ENCODE measurements at regions of chr11 and their contacts with region 1.

Region 1: GRCh38 chr11:57249384-57250319 is 12.6 kb upstream of the APLNR start:
- DNase-seq: no peak
- H3K4me3 ChIP-seq: no peak overlapping the region
- H3K27me3 ChIP-seq: peaks cover 2% of the 10 kb centered on the region; the same call in 1 of the 2 replicates
- CTCF ChIP-seq: peak; percentile 87

Region 2: GRCh38 chr11:56271092-56271491 is 978.6 kb before region 1 on chr11:
- CTCF ChIA-PET with region 1: no interaction called
- POLR2A ChIA-PET with region 1: no interaction called
- DNase-seq: no peak
- H3K4me3 ChIP-seq: no peak overlapping the region
- H3K27me3 ChIP-seq: no peaks in the 10 kb centered on the region
- CTCF ChIP-seq: no peak

Region 3: DNA sequence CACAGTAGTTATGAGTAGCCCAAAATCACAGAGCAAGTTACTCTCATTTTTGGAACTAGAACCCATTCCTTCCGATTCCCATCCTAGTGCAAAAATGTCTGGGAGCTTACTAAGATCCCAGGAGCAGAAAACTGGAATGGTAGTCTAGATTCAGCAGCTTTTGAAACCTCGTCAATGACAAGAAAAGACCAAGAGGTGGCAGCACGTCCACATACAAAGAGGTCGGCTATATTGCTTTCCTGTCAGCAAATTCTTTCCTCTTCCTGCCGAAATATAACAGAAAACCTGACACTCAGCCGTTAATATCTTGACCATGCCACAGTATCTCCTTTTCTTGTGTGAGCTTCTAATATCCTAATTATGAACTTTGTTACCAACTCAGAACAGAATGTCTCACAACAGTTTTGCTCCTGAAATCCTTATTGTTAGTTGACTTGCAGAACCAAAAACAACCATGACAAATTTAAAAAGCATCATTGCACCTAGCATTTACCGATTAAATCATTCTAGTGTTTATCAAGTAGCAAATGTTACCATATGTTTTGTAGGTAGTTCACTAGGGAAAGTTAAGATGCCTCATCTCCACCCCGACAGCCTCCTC is 408.3 kb before region 1 on chr11:
- CTCF ChIA-PET with region 1: interaction called, 150 read pairs
- POLR2A ChIA-PET with region 1: interaction called, 9 read pairs
- DNase-seq: peak; percentile 5
- H3K4me3 ChIP-seq: no peak overlapping the region
- H3K27me3 ChIP-seq: no peaks in the 10 kb centered on the region
- CTCF ChIP-seq: peak; percentile 68

Region 4: GRCh38 chr11:57072640-57073039 is 177.0 kb before region 1 on chr11:
- CTCF ChIA-PET with region 1: interaction called, 5 read pairs
- POLR2A ChIA-PET with region 1: interaction called, 14 read pairs
- DNase-seq: peak; percentile 91
- H3K4me3 ChIP-seq: no peak overlapping the region
- H3K27me3 ChIP-seq: no peaks in the 10 kb centered on the region
- CTCF ChIP-seq: no peak

Region 5: GRCh38 chr11:57124917-57125316 is 124.7 kb before region 1 on chr11:
- CTCF ChIA-PET with region 1: interaction called, 72 read pairs
- POLR2A ChIA-PET with region 1: interaction called, 5 read pairs
- DNase-seq: no peak
- H3K4me3 ChIP-seq: no peak overlapping the region
- H3K27me3 ChIP-seq: peaks cover 4% of the 10 kb centered on the region; the same call in 1 of the 2 replicates
- CTCF ChIP-seq: no peak

Region 6: GRCh38 chr11:57196596-57196995 is 53.1 kb before region 1 on chr11:
- CTCF ChIA-PET with region 1: interaction called, 51 read pairs
- POLR2A ChIA-PET with region 1: no interaction called
- DNase-seq: no peak
- H3K4me3 ChIP-seq: no peak overlapping the region
- H3K27me3 ChIP-seq: peaks cover 4% of the 10 kb centered on the region; the same call in 1 of the 2 replicates
- CTCF ChIP-seq: no peak

Region 7: GRCh38 chr11:57224537-57224936 is 25.1 kb before region 1 on chr11:
- CTCF ChIA-PET with region 1: interaction called, 16 read pairs
- POLR2A ChIA-PET with region 1: no interaction called
- DNase-seq: no peak
- H3K4me3 ChIP-seq: no peak overlapping the region
- H3K27me3 ChIP-seq: no peaks in the 10 kb centered on the region; the same call in 1 of the 2 replicates
- CTCF ChIP-seq: no peak

Region 8: GRCh38 chr11:57260937-57261783 is 11.5 kb after region 1 on chr11:
- CTCF ChIA-PET with region 1: interaction called, 54 read pairs
- POLR2A ChIA-PET with region 1: no interaction called
- DNase-seq: no peak
- H3K4me3 ChIP-seq: no peak overlapping the region
- H3K27me3 ChIP-seq: no peaks in the 10 kb centered on the region; the same call in 1 of the 2 replicates
- CTCF ChIP-seq: no peak